Dendritic cell treated with granulocyte-macrophage colony-stimulating factor and Interleukin-4, amounts not matched to agents 40 ng/mL and 50 ng/mL, for 4 days (primary cell): ENCODE measurements at regions of chr5 and their contacts with region 1.

Region 1: DNA sequence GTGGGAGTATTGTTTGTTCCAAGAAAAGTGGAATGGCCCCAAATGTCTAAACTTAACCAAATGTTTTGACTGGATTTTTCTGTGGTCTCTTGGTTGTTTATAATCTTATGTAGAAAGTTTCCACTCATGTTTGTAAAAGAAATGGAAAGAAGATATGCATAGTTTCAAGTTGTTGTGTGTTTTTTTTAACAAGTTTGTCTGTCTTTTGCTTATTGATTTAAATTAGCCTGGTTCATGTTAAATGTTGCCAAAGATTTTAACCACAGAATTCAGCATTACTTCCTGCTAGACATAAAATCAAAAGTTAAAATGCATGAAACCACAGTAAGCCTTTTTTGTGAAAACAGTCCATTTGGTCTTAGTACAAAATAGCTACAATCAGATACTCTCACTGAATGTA is 14.0 kb downstream of the PPWD1 start:
- H3K4me3 Mint-ChIP-seq: no peak overlapping the region
- H3K27ac Mint-ChIP-seq: no peak overlapping the region
- H3K4me1 Mint-ChIP-seq: no peaks in the 10 kb centered on the region
- H3K27me3 Mint-ChIP-seq: no peaks in the 10 kb centered on the region

Region 2: GRCh38 chr5:65647941-65648340 is 70.8 kb after region 1 on chr5:
- intact Hi-C with region 1: loop called (anchors 2 kb)
- H3K4me3 Mint-ChIP-seq: no peak overlapping the region
- H3K27ac Mint-ChIP-seq: no peak overlapping the region
- H3K4me1 Mint-ChIP-seq: no peaks in the 10 kb centered on the region
- H3K27me3 Mint-ChIP-seq: no peaks in the 10 kb centered on the region